GM18951 (cell line): ENCODE measurements at regions of chr20 and their contacts with region 1.

Region 1: DNA sequence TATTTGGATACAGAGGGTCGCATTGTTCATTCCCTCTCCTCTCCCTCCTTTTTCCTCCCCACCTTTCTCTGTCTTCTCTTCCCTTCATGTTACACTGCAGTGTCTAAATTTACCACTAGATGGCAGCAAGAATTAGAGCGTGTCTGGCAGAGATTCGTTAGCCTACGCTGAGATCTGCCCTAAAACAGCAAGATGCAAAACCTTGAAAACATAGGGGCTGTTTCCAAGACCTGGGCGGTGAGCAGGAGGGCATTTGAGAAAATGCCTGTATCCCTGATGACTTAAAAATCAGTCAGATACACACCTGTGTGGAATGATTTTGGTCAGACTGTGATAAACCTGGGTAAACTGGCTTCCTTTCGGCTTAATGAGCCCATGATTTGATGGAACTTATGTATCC is 101.5 kb upstream of the ISM1 start:
- POLR2A ChIP-seq: no peak

Region 2: GRCh38 chr20:11807066-11808048 is 1312.2 kb before region 1 on chr20:
- in situ Hi-C with region 1: no loop called
- POLR2A ChIP-seq: no peak

Region 3: DNA sequence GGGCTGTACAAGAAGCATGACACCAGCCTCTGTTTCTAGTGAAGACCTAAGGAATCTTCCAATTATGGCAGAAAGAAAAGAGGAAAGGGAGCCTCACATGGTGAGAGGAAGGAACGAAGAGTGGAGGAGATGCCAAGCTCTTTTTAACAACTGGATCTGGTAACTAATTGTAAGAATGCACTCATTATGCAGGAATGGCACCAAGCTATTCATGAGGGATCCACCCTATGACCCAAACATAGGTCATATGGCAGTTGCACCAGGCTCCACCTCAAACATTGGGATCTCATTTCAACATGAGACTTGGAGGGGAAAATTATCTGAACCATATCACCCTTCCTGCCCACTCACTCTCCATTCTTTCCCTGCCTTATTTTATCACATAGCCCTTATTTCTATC is 606.8 kb before region 1 on chr20:
- in situ Hi-C with region 1: no loop called
- POLR2A ChIP-seq: no peak

Region 4: GRCh38 chr20:12737900-12738299 is 381.7 kb before region 1 on chr20:
- in situ Hi-C with region 1: no loop called
- POLR2A ChIP-seq: no peak

Region 5: GRCh38 chr20:13299401-13299800 is 179.8 kb after region 1 on chr20:
- in situ Hi-C with region 1: loop called (anchors 10 kb)
- POLR2A ChIP-seq: no peak

Region 6: DNA sequence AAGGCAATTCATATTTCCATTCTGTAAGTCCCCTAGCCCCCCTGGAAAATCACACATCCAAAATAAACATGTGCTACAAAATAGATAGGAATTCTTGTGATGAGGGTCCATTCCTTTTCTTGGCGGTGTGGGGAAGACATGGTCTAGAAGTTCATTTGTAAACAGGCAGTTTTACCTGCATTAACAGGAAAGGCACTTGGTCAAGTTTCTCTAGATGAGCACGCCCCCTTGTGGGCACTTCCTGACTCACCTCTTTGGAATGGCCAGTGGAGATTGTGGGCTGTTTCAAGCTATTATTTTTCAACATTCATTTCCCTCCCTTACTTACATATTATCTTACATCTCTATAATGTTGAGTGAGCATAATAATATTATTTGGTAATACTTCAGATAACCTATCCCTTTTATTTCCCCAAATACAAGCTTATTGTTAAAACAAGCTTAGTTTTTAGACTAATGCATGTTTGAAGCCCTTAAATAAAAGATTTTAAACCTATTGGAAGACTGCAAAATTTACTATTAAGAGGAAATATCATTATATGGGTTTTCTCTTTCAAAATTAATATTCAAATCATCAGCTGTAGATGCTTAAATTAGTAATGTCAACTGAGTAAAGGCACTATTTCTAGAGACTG is 427.0 kb after region 1 on chr20:
- in situ Hi-C with region 1: loop called (anchors 10 kb)
- POLR2A ChIP-seq: no peak

Region 7: GRCh38 chr20:13771853-13772453 is 652.4 kb after region 1 on chr20:
- in situ Hi-C with region 1: loop called (anchors 25 kb)
- POLR2A ChIP-seq: no peak